ENCODE measurements at regions of chr6 and their contacts with region 1.

Region 1: DNA sequence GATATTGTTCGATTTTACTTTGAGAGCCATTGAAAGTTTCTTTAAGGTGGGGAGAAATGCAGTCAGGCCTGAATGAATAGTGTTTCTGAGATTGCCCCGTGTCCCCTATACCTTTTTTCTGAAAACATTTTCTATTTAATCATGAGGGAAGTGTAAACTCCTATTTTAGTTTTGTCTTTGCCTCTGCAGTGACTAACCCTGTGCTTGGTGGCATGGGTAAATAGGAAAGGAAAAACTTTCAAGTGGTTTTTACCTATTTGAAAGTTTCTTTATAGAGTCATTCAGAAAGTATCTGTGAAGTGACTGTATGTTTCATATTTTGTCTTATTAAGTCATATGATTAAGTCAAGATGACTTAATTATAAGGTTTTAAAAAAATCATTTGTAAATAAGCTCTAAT is 14.5 kb downstream of the SNRNP48 start:
- DNase-seq: no peak
- ATAC-seq: no peak
- H3K4me3 ChIP-seq: no peak overlapping the region
- H3K27ac ChIP-seq: no peak overlapping the region
- H3K4me1 ChIP-seq: no peaks in the 10 kb centered on the region
- H3K27me3 ChIP-seq: no peaks in the 10 kb centered on the region
- CTCF ChIP-seq: no peak

Region 2: GRCh38 chr6:7300926-7301325 is 303.6 kb before region 1 on chr6:
- intact Hi-C with region 1: loop called in 1 of 3 experiments (anchors 10 kb)
- DNase-seq: no peak
- ATAC-seq: peak in 1 of 4 donors; percentile 20
- H3K4me3 ChIP-seq: no peak overlapping the region
- H3K27ac ChIP-seq: no peak overlapping the region
- H3K4me1 ChIP-seq: peaks cover 0 to 7% (median 5%) of the 10 kb centered on the region in 3 donors
- H3K27me3 ChIP-seq: no peaks in the 10 kb centered on the region
- CTCF ChIP-seq: no peak

Region 3: GRCh38 chr6:7431674-7432390 is 172.7 kb before region 1 on chr6:
- intact Hi-C with region 1: loop called in 1 of 3 experiments (anchors 10 kb)
- DNase-seq: peak in 1 of 6 donors; percentile 65
- ATAC-seq: peak in 3 of 4 donors; percentile 47 to 53 (median 50)
- H3K4me3 ChIP-seq: no peak overlapping the region
- H3K27ac ChIP-seq: no peak overlapping the region
- H3K4me1 ChIP-seq: no peaks in the 10 kb centered on the region
- H3K27me3 ChIP-seq: no peaks in the 10 kb centered on the region
- CTCF ChIP-seq: no peak

Region 4: DNA sequence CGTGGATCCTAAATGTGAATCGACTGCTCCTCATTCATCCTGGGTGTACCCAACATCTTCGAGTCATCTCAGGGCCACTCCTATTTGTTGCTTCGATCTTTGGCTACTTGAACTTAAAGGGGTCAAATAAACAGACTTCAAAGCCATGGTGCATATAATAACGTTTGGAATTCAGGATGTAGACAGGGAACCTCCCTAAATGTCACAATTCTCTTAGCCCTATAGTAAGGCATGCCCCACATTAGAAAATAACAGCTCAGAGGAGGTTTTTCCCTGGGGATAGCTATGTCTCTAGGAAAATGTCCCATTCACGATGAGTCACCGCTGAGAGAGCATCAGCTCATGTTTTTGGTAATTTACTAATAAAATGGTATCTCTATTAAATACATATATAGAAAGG is 66.6 kb after region 1 on chr6:
- intact Hi-C with region 1: no loop called
- DNase-seq: no peak
- ATAC-seq: peak in 1 of 4 donors; percentile 30
- H3K4me3 ChIP-seq: no peak overlapping the region
- H3K27ac ChIP-seq: no peak overlapping the region
- H3K4me1 ChIP-seq: no peaks in the 10 kb centered on the region
- H3K27me3 ChIP-seq: no peaks in the 10 kb centered on the region
- CTCF ChIP-seq: no peak

Region 5: DNA sequence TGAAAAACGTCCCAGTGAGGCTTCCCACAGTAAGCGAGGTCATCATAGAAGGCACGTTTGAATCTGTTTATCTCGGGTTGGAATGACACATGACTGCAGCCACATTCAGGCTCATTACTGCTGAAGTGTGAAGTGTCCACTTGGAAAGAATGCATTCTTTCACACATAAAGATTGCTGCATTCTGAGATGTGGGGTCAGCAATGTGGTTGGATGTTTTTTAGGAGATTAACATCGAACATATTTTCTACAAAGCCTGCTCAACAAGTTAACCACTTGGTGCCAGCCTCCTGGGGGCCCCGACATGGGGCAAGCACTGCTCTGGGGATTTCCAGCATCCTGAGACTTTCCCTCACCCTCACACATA is 201.3 kb after region 1 on chr6:
- intact Hi-C with region 1: no loop called
- DNase-seq: no peak
- ATAC-seq: no peak
- H3K4me3 ChIP-seq: no peak overlapping the region
- H3K27ac ChIP-seq: no peak overlapping the region
- H3K4me1 ChIP-seq: no peaks in the 10 kb centered on the region
- H3K27me3 ChIP-seq: no peaks in the 10 kb centered on the region
- CTCF ChIP-seq: no peak

Measured in pancreas (tissue), 10 donors.